Naive thymus-derived CD4-positive, alpha-beta T cell (primary cell): ENCODE measurements at regions of chr10 and their contacts with region 1.

Region 1: GRCh38 chr10:14648005-14648765 is 126.5 kb downstream of the FAM107B start:
- DNase-seq: peak; percentile 55 to 93 (median 86)
- ATAC-seq: peak; percentile 91
- H3K4me3 ChIP-seq: peak overlapping the region; percentile 54
- H3K4me3 Mint-ChIP-seq: peak overlapping the region; percentile 77 to 98 (median 88)
- H3K27ac ChIP-seq: peak overlapping the region; percentile 98
- H3K27ac Mint-ChIP-seq: peak overlapping the region; percentile 95 to 100 (median 99)
- H3K4me1 ChIP-seq: peaks cover 25 to 31% of the 10 kb centered on the region in 2 donors
- H3K4me1 Mint-ChIP-seq: peaks cover 20 to 70% (median 61%) of the 10 kb centered on the region in 7 donors
- H3K27me3 ChIP-seq: no peaks in the 10 kb centered on the region
- H3K27me3 Mint-ChIP-seq: no peaks in the 10 kb centered on the region

Region 2: DNA sequence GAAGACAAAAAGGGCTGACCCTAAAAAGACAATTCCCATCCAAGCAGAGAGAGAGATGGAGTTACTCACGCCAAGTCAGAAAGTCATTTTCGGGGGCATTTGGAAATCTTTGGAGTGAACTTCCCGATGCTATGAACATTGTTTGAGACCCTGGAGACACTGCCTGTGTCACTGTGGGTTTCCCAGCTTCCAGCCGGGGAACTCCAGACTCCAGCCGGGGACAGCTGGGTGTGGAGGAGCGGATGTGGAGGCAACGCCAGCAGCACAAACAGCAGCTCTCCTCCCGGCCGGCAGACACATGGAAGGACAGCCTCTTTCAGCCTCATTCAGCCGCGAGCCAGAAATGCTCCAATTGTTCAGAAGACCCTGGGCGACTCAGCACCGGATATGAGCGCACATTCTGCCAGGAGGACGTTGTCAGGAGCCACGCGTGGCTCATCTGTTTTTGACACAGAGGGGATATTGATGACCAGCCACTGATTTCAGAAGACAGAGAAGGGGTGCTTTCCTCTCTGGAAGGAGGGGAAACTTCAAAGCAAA is 963.9 kb before region 1 on chr10:
- CTCF ChIA-PET with region 1: no interaction called
- POLR2A ChIA-PET with region 1: no interaction called
- intact Hi-C with region 1: no loop called
- DNase-seq: no peak
- ATAC-seq: no peak
- H3K4me3 ChIP-seq: no peak overlapping the region
- H3K4me3 Mint-ChIP-seq: no peak overlapping the region
- H3K27ac ChIP-seq: no peak overlapping the region
- H3K27ac Mint-ChIP-seq: no peak overlapping the region
- H3K4me1 ChIP-seq: no peaks in the 10 kb centered on the region
- H3K4me1 Mint-ChIP-seq: no peaks in the 10 kb centered on the region
- H3K27me3 ChIP-seq: no peaks in the 10 kb centered on the region
- H3K27me3 Mint-ChIP-seq: peaks cover 0 to 15% (median 11%) of the 10 kb centered on the region in 5 donors

Region 3: GRCh38 chr10:14500172-14500765 is 147.9 kb before region 1 on chr10:
- CTCF ChIA-PET with region 1: no interaction called
- POLR2A ChIA-PET with region 1: no interaction called
- intact Hi-C with region 1: loop called in 1 of 2 experiments (anchors 2 kb)
- DNase-seq: no peak
- ATAC-seq: no peak
- H3K4me3 ChIP-seq: no peak overlapping the region
- H3K4me3 Mint-ChIP-seq: no peak overlapping the region
- H3K27ac ChIP-seq: no peak overlapping the region
- H3K27ac Mint-ChIP-seq: peak overlapping the region in 4 of 9 donors; percentile 28 to 56 (median 40)
- H3K4me1 ChIP-seq: no peaks in the 10 kb centered on the region
- H3K4me1 Mint-ChIP-seq: peaks cover 4 to 15% (median 6%) of the 10 kb centered on the region in 7 donors
- H3K27me3 ChIP-seq: no peaks in the 10 kb centered on the region
- H3K27me3 Mint-ChIP-seq: peaks cover 0 to 12% (median 0%) of the 10 kb centered on the region in 5 donors

Region 4: GRCh38 chr10:14543046-14543903 is 104.9 kb before region 1 on chr10:
- CTCF ChIA-PET with region 1: no interaction called
- POLR2A ChIA-PET with region 1: interaction called, 3 read pairs
- intact Hi-C with region 1: loop called in 1 of 2 experiments (anchors 1 kb)
- DNase-seq: peak in 7 of 9 donors; percentile 60 to 81 (median 73)
- ATAC-seq: peak; percentile 86
- H3K4me3 ChIP-seq: peak overlapping the region; percentile 28
- H3K4me3 Mint-ChIP-seq: peak overlapping the region; percentile 46 to 82 (median 76)
- H3K27ac ChIP-seq: peak overlapping the region; percentile 72
- H3K27ac Mint-ChIP-seq: peak overlapping the region; percentile 73 to 96 (median 84)
- H3K4me1 ChIP-seq: peaks cover 23 to 42% of the 10 kb centered on the region in 2 donors
- H3K4me1 Mint-ChIP-seq: peaks cover 57 to 97% (median 94%) of the 10 kb centered on the region in 7 donors
- H3K27me3 ChIP-seq: no peaks in the 10 kb centered on the region
- H3K27me3 Mint-ChIP-seq: no peaks in the 10 kb centered on the region

Region 5: DNA sequence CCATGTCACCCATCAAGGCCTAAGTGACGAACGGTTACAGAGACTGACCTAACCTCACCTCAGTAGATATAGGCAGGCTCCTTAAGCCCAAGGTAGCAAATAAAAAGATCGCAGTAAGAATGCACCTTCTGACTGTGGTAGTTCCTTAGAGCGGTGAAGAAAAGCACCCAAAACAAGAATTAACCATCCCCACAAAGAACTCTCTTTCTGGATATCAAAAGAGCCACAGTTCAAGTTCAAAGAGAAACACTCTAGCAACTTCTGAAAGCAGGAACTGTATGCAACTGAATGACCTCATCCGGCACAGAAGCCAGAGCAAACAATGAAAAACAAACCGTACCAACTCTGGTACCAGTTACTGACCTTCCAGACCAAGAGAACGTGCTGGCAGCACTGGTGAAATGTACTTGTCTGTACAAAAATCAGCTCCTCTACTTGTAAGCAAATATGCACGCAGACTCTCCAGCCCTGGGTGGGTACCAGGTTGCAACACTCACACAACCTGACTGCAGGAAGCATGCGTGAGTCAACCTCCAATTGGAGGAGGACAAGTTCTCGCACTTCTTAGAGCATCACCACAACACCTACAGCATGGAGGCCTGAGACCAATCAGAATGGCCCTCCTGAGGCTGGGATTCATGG is 76.2 kb before region 1 on chr10:
- CTCF ChIA-PET with region 1: no interaction called
- POLR2A ChIA-PET with region 1: interaction called, 4 read pairs
- intact Hi-C with region 1: loop called (anchors 1 kb)
- DNase-seq: peak in 8 of 9 donors; percentile 47 to 94 (median 90)
- ATAC-seq: peak; percentile 80
- H3K4me3 ChIP-seq: peak overlapping the region; percentile 67
- H3K4me3 Mint-ChIP-seq: peak overlapping the region; percentile 86 to 98 (median 96)
- H3K27ac ChIP-seq: peak overlapping the region; percentile 87
- H3K27ac Mint-ChIP-seq: peak overlapping the region; percentile 93 to 100 (median 99)
- H3K4me1 ChIP-seq: peaks cover 40 to 53% of the 10 kb centered on the region in 2 donors
- H3K4me1 Mint-ChIP-seq: peaks cover 42 to 88% (median 79%) of the 10 kb centered on the region in 7 donors
- H3K27me3 ChIP-seq: no peaks in the 10 kb centered on the region
- H3K27me3 Mint-ChIP-seq: no peaks in the 10 kb centered on the region

Region 6: DNA sequence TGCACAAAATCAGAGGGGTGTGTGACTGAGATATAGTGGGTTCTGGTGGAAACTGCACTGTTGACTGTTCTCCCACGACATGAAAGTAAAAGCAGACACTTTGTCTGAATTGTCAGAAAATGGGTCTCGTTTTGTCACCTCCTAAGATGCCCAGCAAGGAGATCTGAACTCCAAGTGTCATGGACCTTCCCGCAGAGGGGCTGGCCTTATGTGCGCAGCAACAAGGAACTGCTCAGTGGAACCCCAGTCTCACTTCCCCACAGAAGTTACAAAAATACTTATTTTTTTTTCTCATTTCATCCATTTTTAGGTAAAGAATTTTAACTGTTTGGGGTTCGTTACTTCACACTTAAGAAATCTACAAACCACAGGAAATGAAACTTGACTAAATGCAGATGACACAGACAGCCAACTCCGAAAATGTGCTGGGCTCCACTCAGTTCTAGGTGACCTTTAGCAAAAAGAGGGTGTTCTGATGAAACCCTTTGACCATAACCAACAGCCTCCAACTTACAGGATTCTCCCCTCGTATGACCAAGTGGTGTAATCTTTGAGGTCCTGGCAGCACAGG is 11.5 kb after region 1 on chr10:
- CTCF ChIA-PET with region 1: no interaction called
- POLR2A ChIA-PET with region 1: interaction called, 7 read pairs
- intact Hi-C with region 1: loop called (anchors 1 kb)
- DNase-seq: peak in 5 of 9 donors; percentile 14 to 75 (median 55)
- ATAC-seq: peak; percentile 87
- H3K4me3 ChIP-seq: peak overlapping the region; percentile 7
- H3K4me3 Mint-ChIP-seq: peak overlapping the region; percentile 52 to 79 (median 74)
- H3K27ac ChIP-seq: peak overlapping the region; percentile 62
- H3K27ac Mint-ChIP-seq: peak overlapping the region; percentile 74 to 97 (median 86)
- H3K4me1 ChIP-seq: peaks cover 24 to 34% of the 10 kb centered on the region in 2 donors
- H3K4me1 Mint-ChIP-seq: peaks cover 42 to 81% (median 57%) of the 10 kb centered on the region in 7 donors
- H3K27me3 ChIP-seq: no peaks in the 10 kb centered on the region
- H3K27me3 Mint-ChIP-seq: peaks cover 0 to 2% (median 0%) of the 10 kb centered on the region in 5 donors

Region 7: DNA sequence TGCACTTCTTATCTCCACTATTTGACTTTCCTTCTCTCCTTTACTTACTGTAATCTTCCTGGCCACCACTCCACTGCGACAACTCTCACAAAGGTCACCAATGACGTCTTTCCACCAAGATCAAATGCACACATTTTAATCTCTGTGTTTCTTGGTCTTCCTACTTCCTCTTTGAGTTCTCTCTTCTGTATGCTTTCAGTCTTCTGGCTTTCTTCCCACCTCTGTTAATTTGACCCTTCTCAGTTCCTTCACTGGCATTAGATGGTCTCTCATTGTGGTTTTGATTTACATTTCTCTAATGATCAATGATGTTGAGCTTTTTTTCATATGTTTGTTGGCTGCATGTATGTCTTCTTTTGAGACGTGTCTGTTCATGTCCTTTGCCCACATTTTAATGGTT is 94.6 kb after region 1 on chr10:
- CTCF ChIA-PET with region 1: no interaction called
- POLR2A ChIA-PET with region 1: no interaction called
- intact Hi-C with region 1: loop called in 1 of 2 experiments (anchors 5 kb)
- DNase-seq: peak in 3 of 9 donors; percentile 2 to 34 (median 9)
- ATAC-seq: peak; percentile 54
- H3K4me3 ChIP-seq: no peak overlapping the region
- H3K4me3 Mint-ChIP-seq: peak overlapping the region in 7 of 10 donors; percentile 3 to 50 (median 14)
- H3K27ac ChIP-seq: no peak overlapping the region
- H3K27ac Mint-ChIP-seq: peak overlapping the region in 8 of 9 donors; percentile 4 to 50 (median 26)
- H3K4me1 ChIP-seq: peaks cover 0 to 4% of the 10 kb centered on the region in 2 donors
- H3K4me1 Mint-ChIP-seq: peaks cover 7 to 36% (median 27%) of the 10 kb centered on the region in 7 donors
- H3K27me3 ChIP-seq: no peaks in the 10 kb centered on the region
- H3K27me3 Mint-ChIP-seq: no peaks in the 10 kb centered on the region

Region 8: DNA sequence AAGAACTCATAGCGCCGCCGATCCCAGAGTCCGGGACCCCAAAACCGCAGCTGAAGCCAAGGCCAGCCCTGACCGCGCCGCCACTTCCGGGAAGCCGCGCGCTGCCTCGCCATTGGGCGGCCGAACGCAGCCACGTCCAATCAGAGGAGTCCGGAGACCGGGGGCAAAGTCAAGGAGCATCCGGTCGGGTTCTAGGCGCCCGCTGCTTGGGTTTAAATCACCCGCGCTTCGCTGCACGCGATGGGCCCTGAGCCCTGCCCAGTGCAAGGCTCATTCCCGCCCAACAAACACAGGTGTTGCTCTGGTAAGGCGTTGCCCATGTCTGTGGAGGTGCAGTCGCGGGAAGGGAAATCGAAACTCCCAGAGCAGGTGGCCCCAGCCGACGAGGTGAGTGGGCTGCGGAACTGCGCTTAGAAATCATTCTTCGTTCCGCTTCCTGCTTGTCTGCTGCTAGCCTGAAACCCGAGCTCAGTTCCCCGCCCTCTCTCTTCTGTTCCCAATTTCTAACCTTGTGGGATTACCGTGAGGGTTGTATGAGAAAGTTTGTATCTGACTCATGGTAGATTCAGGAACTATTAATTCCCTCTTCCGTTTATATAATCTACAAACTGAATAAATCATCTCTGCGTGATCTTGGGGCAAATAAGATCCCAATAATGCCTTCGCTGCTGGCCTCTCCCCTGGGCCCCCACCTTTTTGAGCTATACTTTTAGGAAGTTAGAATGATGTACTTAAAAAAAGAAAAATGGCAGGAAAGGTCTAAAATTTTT is 306.0 kb after region 1 on chr10 and contains the start of gene DCLRE1C:
- CTCF ChIA-PET with region 1: no interaction called
- POLR2A ChIA-PET with region 1: interaction called, 3 read pairs
- intact Hi-C with region 1: loop called (anchors 1 to 5 kb)
- DNase-seq: peak; percentile 70 to 89 (median 87)
- ATAC-seq: peak; percentile 90
- H3K4me3 ChIP-seq: peak within 1 kb of the TSS; percentile 97
- H3K4me3 Mint-ChIP-seq: peak within 1 kb of the TSS; percentile 89 to 96 (median 92)
- H3K27ac ChIP-seq: peak within 1 kb of the TSS; percentile 78
- H3K27ac Mint-ChIP-seq: peak within 1 kb of the TSS; percentile 91 to 97 (median 96)
- H3K4me1 ChIP-seq: peaks cover 29 to 32% of the 10 kb centered on the region in 2 donors
- H3K4me1 Mint-ChIP-seq: peaks cover 29 to 69% (median 65%) of the 10 kb centered on the region in 7 donors
- H3K27me3 ChIP-seq: no peaks in the 10 kb centered on the region
- H3K27me3 Mint-ChIP-seq: no peaks in the 10 kb centered on the region
- total RNA-seq, gene DCLRE1C: 16.4 to 38.7 (median 24.2) TPM